ENCODE measurements at regions of chr3 and their contacts with region 1.

Region 1: DNA sequence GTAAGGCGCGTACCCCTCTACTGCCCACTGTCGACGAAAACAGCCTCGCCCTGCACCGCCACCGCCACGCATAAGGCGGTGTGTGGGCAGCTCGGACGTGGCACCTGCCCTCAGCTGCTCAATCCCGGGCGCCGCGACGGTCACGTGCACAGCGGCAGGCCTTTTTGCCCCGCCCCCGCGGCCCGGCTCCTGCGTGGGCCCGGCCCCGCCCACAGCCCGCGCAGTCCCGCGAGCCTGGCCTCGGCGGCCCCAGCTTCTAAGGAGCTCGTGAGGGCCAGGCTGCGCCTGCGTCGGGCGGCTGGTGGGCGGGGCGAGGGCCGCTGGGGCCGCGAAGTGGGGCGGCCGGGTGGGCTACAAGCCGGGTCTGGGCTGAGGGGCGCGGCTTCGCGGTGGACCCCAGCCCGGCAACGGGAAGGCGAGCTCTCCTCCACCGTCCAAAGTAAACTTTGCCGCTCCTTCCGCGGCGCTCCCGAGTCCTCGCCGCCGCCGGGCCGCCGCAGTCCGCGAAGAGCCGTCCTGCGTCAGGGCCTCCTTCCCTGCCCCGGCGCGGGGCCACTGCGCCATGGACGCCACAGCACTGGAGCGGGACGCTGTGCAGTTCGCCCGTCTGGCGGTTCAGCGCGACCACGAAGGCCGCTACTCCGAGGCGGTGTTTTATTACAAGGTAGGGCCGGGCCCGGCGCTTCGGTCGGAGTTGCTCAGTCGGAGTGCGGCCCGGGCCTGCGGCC is at the start of gene CAPN7:
- DNase-seq: peak; percentile 98
- H3K4me3 ChIP-seq: peak within 1 kb of the TSS; percentile 76 to 91 (median 83)
- H3K27ac ChIP-seq: peak within 1 kb of the TSS; percentile 95 to 98 (median 98)
- H3K4me1 ChIP-seq: peaks cover 8 to 48% (median 34%) of the 10 kb centered on the region in 4 donors
- H3K27me3 ChIP-seq: no peaks in the 10 kb centered on the region
- CTCF ChIP-seq: peak in 3 of 7 experiments; percentile 29 to 36 (median 30)
- EP300 ChIP-seq: no peak
- POLR2A ChIP-seq: peak in 2 of 4 donors; percentile 10 to 28
- total RNA-seq, gene CAPN7: 68.4 to 483 (median 118) TPM

Region 2: DNA sequence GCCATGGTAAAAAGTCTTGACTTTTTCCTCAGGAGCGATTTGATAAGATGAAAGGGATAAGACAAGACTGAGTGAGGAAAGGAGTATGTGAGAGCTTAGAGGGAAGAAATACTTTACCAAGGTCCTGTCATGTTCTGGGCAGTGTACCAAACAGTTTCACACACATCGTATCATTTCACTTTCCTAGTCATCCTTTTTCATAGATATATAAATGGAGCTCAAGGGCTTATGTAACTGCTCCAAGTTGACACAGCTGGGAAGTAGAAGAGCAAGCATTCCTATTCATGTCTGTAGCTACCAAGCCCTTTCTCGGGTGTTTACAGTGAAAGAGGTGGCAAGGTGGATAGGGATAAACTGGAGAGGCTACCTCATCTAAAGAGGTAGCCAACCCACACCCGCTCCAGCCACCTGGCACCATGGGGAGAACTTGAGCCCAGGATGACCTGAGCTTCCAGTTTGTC is 198.4 kb before region 1 on chr3:
- intact Hi-C with region 1: no loop called
- DNase-seq: peak in 1 of 2 donors; percentile 18
- H3K4me3 ChIP-seq: no peak overlapping the region
- H3K27ac ChIP-seq: no peak overlapping the region
- H3K4me1 ChIP-seq: peaks cover 0 to 4% (median 0%) of the 10 kb centered on the region in 4 donors
- H3K27me3 ChIP-seq: no peaks in the 10 kb centered on the region
- CTCF ChIP-seq: no peak
- EP300 ChIP-seq: no peak
- POLR2A ChIP-seq: no peak

Region 3: GRCh38 chr3:15108082-15108545 is 98.0 kb before region 1 on chr3:
- intact Hi-C with region 1: no loop called
- DNase-seq: peak; percentile 70 to 91
- H3K4me3 ChIP-seq: no peak overlapping the region
- H3K27ac ChIP-seq: no peak overlapping the region
- H3K4me1 ChIP-seq: peaks cover 1 to 10% (median 10%) of the 10 kb centered on the region in 4 donors
- H3K27me3 ChIP-seq: no peaks in the 10 kb centered on the region
- CTCF ChIP-seq: peak in 5 of 7 experiments; percentile 71 to 90 (median 80)
- EP300 ChIP-seq: no peak
- POLR2A ChIP-seq: no peak

Region 4: DNA sequence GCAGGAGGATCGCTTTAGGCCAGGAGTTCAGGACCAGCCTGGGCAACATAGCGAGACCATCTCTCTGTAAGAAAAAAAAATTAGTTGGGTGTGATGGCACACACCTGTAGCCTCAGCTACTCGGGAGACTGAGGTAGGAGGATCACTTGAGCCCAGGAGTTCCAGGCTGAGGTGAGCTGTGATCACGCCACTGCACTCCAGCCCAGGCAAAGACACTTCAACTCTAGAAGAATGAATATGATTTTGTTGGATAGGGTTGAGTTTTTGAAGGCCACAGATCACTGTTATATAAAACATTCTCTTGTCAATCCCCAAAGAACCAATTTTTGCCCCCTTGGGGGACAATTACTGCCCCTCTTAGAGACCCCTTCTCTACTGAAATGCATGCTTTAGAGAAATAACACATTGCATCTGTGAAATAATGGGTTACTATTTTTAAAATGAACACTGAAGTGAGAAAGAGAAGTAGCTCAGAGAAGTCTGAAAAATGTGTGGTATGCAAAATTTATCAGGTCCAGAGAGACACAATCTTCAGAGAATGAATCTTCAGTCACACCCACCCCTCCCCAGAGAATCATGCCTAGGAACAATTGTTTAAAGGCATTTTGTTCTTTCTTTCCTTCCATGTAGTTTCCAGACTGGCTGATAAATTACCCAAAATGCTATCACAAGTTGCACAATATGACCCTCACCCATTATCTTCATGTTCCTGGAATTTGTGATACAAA is 178.6 kb after region 1 on chr3:
- intact Hi-C with region 1: loop called (anchors 10 kb)
- DNase-seq: no peak
- H3K4me3 ChIP-seq: no peak overlapping the region
- H3K27ac ChIP-seq: peak overlapping the region in 1 of 5 donors; percentile 62
- H3K4me1 ChIP-seq: no peaks in the 10 kb centered on the region
- H3K27me3 ChIP-seq: no peaks in the 10 kb centered on the region
- CTCF ChIP-seq: no peak
- EP300 ChIP-seq: no peak
- POLR2A ChIP-seq: no peak

Measured in stomach (tissue), 19 donors.